Posterior vena cava (tissue), 2 donors: ENCODE measurements at regions of chr7 and their contacts with region 1.

Region 1: DNA sequence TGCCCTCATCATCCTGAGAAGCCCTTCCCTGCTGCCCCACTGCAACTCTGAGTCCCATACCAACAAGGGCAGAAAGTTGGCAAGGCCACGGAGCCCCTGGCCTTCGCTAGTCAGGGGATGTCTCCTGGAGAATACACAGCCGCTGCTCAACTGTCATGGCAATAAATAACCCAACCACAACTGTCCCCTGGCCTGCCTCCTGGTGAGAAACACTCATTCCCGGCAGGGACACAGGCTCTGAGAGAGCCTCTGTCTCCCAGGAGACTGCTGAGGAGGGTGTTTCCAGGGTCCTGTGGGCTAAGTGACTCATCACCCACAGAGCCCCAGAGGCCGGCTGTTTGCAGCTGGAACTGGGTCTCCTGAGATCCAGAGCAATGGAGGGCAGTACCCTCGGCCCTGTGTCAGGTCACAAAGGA is 354.1 kb downstream of the TNS3 start:
- DNase-seq: no peak

Region 2: GRCh38 chr7:45359776-45360175 is 1868.0 kb before region 1 on chr7:
- intact Hi-C with region 1: loop called in 1 of 2 experiments (anchors 5 kb)
- DNase-seq: no peak